Natural killer cell (primary cell): ENCODE measurements at regions of chr1 and their contacts with region 1.

Region 1: DNA sequence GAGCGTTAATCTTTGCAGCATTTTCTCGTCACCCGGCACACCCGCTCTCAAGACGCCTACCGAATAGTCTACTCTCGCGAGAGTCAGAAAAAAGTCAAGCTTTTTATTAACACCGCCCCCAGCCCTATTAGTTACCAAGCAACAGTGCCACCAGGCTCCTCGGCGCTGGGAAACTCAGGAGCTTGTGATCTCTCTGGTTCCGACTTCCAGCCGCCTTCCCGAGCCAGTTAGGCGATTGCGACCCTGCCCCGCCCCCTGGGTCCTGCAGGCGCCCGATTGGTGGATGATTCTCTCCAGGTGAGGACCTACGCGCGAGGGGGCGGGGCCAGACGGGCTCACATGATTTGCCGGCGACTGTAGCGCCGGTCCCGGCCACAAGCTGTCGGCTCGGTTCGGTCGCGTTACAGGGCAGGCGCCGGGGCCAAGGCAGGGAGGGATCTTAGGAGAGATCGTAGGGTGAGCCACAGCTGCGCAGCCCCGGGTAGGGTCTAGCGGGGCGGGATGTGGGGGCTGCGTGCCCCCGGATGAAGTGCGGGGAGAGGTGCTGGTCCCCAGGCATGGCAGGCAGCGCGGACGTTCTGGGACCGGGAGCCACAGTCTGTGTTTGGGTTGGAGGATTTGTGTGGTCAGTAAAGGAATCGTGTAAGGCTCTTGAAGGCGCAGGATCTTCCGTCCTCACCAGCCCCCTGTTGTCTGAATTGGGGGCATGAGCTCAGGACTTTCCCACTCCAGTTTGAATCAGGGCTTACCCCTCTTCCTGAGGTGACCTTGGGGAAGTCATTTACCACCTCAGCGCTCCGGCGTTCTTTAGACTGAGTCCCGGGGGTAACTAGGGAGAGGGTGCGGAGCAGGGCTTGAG is at the start of gene PFKFB2:
- DNase-seq: peak; percentile 91 to 95
- ATAC-seq: peak; percentile 83 to 93 (median 89)
- H3K4me3 ChIP-seq: peak within 1 kb of the TSS; percentile 60
- H3K4me3 Mint-ChIP-seq: peak within 1 kb of the TSS; percentile 100
- H3K27ac ChIP-seq: peak within 1 kb of the TSS; percentile 67
- H3K27ac Mint-ChIP-seq: peak within 1 kb of the TSS; percentile 96 to 97
- H3K4me1 ChIP-seq: peaks cover 25% of the 10 kb centered on the region
- H3K4me1 Mint-ChIP-seq: peaks cover 40 to 43% of the 10 kb centered on the region in 2 donors
- H3K27me3 ChIP-seq: no peaks in the 10 kb centered on the region
- H3K27me3 Mint-ChIP-seq: no peaks in the 10 kb centered on the region
- CTCF ChIP-seq: no peak
- total RNA-seq, gene PFKFB2: 5.3 to 8.5 (median 7.4) TPM

Region 2: DNA sequence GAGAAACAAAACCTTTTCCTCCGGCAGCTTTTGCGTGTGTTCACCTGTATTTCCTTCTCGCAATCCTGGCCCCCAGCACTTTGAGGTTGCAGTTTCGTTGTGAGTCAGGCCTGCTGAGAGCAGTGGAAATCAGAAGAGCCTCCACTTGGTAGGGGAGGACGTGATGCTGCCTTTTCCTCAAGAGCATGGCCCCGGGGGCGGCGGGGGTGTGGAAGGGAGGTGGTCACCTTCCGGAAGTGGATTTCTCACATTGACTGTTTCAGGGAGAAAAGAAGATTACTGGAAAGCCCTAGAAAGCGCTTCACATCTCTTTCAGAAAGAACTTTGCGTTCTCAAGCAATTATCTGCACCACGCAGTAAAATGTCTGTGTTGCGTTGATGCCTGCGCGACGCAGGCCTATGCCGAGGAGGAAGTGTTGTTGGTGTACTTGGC is 268.7 kb before region 1 on chr1:
- intact Hi-C with region 1: no loop called
- DNase-seq: peak in 1 of 2 donors; percentile 79
- ATAC-seq: no peak
- H3K4me3 ChIP-seq: no peak overlapping the region
- H3K4me3 Mint-ChIP-seq: peak overlapping the region; percentile 1
- H3K27ac ChIP-seq: no peak overlapping the region
- H3K27ac Mint-ChIP-seq: no peak overlapping the region
- H3K4me1 ChIP-seq: peaks cover 40% of the 10 kb centered on the region
- H3K4me1 Mint-ChIP-seq: peaks cover 52 to 54% of the 10 kb centered on the region in 2 donors
- H3K27me3 ChIP-seq: peaks cover 3% of the 10 kb centered on the region
- H3K27me3 Mint-ChIP-seq: peaks cover 22 to 60% of the 10 kb centered on the region in 2 donors
- CTCF ChIP-seq: no peak

Region 3: DNA sequence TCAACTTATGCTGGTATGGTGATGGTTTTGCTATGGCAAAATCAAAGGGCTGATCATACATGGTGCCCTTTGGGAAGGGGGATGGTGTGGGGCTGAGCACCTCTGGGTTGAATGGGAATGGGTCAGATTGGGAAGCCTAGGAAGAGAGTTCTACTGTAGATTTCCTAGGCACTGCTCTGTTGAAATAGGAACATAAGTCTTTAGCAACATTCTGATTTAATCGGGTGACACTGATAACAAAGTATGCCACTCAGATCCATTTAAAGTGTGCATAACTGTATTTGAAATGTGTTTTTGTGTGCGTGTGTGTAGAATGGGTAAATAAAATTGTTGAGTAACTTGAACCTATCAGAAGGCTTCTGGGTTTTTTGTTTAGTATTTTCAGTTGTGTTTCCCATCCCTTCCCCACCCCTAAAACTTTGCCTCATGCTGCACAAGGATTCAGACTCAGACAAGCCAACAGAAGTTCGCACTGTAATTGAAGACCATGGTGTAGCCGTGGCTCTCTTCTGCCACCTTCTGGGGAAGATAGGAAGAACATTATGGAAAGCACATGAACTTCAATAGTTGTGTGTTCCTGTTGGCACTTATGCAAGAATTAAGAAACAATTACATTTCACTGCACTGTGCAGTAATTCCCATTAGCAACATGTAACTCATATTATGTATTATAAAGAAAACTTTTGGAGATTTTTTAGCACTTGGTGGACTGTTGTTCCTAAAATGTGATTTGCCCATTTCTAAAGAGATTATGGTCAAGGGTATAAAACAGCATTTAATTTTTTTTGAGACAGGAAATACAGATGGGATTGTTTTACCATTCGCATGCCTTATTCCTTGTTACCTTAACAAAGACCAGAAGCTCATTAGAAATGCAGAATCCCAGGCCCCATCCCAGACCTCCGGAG is 24.6 kb after region 1 on chr1:
- intact Hi-C with region 1: loop called (anchors 1 kb)
- DNase-seq: peak in 1 of 2 donors; percentile 89
- ATAC-seq: peak; percentile 92 to 100 (median 98)
- H3K4me3 ChIP-seq: no peak overlapping the region
- H3K4me3 Mint-ChIP-seq: no peak overlapping the region
- H3K27ac ChIP-seq: no peak overlapping the region
- H3K27ac Mint-ChIP-seq: no peak overlapping the region
- H3K4me1 ChIP-seq: no peaks in the 10 kb centered on the region
- H3K4me1 Mint-ChIP-seq: no peaks in the 10 kb centered on the region
- H3K27me3 ChIP-seq: no peaks in the 10 kb centered on the region
- H3K27me3 Mint-ChIP-seq: peaks cover 8 to 11% of the 10 kb centered on the region in 2 donors
- CTCF ChIP-seq: peak; percentile 89

Region 4: DNA sequence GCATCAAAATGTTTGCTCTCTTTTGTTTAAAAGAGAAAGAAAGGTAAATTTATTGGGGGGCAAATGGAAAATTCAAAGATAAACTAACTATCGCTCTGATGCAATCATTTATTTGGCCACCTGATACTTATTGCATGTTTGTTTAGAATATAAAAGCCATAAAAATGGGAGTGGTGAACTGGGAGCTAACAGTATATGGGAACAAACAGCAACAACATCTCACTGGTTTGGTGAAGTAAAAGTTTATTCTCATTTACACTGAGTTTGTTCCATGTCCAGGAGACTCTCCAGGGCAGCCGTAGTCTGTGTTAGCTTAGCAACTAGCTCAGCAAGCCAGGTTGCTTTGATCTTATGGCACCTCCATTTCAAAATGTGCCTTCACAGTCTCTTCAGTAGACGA is 71.2 kb after region 1 on chr1:
- intact Hi-C with region 1: no loop called
- DNase-seq: no peak
- ATAC-seq: no peak
- H3K4me3 ChIP-seq: no peak overlapping the region
- H3K4me3 Mint-ChIP-seq: no peak overlapping the region
- H3K27ac ChIP-seq: no peak overlapping the region
- H3K27ac Mint-ChIP-seq: no peak overlapping the region
- H3K4me1 ChIP-seq: no peaks in the 10 kb centered on the region
- H3K4me1 Mint-ChIP-seq: no peaks in the 10 kb centered on the region
- H3K27me3 ChIP-seq: no peaks in the 10 kb centered on the region
- H3K27me3 Mint-ChIP-seq: peaks cover 22 to 43% of the 10 kb centered on the region in 2 donors
- CTCF ChIP-seq: no peak

Region 5: DNA sequence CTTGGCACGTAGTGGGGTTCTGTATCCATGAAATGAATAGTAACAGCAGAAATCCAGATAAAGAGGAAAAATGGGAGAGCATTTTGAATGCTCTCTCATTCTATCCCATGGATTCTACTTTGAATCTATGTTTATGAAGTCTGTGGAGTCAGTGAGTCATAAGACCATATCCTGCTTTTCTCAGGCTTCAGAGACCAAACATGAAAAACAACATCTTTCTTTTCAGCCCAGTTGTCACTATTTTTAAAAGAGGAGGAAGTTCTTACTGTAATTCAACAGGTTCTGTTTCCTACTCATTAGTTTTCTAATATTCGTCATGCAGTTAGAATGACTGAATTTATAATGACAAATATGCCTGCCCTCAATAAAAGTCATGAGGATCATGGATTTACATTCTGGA is 228.9 kb after region 1 on chr1:
- intact Hi-C with region 1: no loop called
- DNase-seq: no peak
- ATAC-seq: no peak
- H3K4me3 ChIP-seq: no peak overlapping the region
- H3K4me3 Mint-ChIP-seq: no peak overlapping the region
- H3K27ac ChIP-seq: no peak overlapping the region
- H3K27ac Mint-ChIP-seq: peak overlapping the region in 1 of 2 donors; percentile 5
- H3K4me1 ChIP-seq: peaks cover 3% of the 10 kb centered on the region
- H3K4me1 Mint-ChIP-seq: peaks cover 7% of the 10 kb centered on the region in 2 donors
- H3K27me3 ChIP-seq: no peaks in the 10 kb centered on the region
- H3K27me3 Mint-ChIP-seq: peaks cover 7 to 15% of the 10 kb centered on the region in 2 donors
- CTCF ChIP-seq: no peak